ENCODE measurements at regions of chr11 and their contacts with region 1.

Region 1: GRCh38 chr11:31958076-31958735 is 132.7 kb upstream of the RCN1 start:
- DNase-seq: peak; percentile 46
- ATAC-seq: no peak
- H3K4me3 ChIP-seq: no peak overlapping the region
- H3K4me3 Mint-ChIP-seq: no peak overlapping the region
- H3K27ac ChIP-seq: no peak overlapping the region
- H3K27ac Mint-ChIP-seq: no peak overlapping the region
- H3K4me1 ChIP-seq: no peaks in the 10 kb centered on the region
- H3K4me1 Mint-ChIP-seq: no peaks in the 10 kb centered on the region
- H3K27me3 ChIP-seq: no peaks in the 10 kb centered on the region
- H3K27me3 Mint-ChIP-seq: peaks cover 13% of the 10 kb centered on the region
- CTCF ChIP-seq: peak; percentile 50

Region 2: GRCh38 chr11:31240338-31240904 is 717.8 kb before region 1 on chr11:
- CTCF ChIA-PET with region 1: interaction called, 3 read pairs
- POLR2A ChIA-PET with region 1: no interaction called
- intact Hi-C with region 1: loop called (anchors 10 kb)
- DNase-seq: peak; percentile 22
- ATAC-seq: no peak
- H3K4me3 ChIP-seq: no peak overlapping the region
- H3K4me3 Mint-ChIP-seq: no peak overlapping the region
- H3K27ac ChIP-seq: no peak overlapping the region
- H3K27ac Mint-ChIP-seq: no peak overlapping the region
- H3K4me1 ChIP-seq: no peaks in the 10 kb centered on the region
- H3K4me1 Mint-ChIP-seq: no peaks in the 10 kb centered on the region
- H3K27me3 ChIP-seq: no peaks in the 10 kb centered on the region
- H3K27me3 Mint-ChIP-seq: no peaks in the 10 kb centered on the region
- CTCF ChIP-seq: peak; percentile 33

Region 3: DNA sequence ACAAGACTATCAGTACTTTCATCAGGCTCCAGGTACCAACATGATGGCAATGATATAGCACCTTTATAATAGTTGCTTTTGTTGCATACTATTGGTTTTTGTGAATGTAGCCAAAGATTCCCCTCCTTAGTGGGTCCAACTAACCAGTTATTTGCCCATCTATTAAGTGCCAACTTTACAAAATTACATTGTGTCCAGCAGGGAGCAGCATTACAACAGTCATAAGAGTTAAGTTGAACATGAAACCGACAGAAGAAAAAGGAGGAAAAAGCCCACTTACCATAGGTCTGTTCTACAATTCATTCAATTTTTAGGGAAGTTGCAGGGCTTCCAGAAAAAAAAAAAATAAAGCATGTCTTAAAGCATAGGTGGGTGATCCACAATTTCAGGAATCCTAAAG is 470.4 kb before region 1 on chr11:
- CTCF ChIA-PET with region 1: no interaction called
- POLR2A ChIA-PET with region 1: no interaction called
- intact Hi-C with region 1: loop called (anchors 5 kb)
- DNase-seq: peak; percentile 36
- ATAC-seq: no peak
- H3K4me3 ChIP-seq: no peak overlapping the region
- H3K4me3 Mint-ChIP-seq: no peak overlapping the region
- H3K27ac ChIP-seq: no peak overlapping the region
- H3K27ac Mint-ChIP-seq: no peak overlapping the region
- H3K4me1 ChIP-seq: no peaks in the 10 kb centered on the region
- H3K4me1 Mint-ChIP-seq: peaks cover 1% of the 10 kb centered on the region
- H3K27me3 ChIP-seq: no peaks in the 10 kb centered on the region
- H3K27me3 Mint-ChIP-seq: no peaks in the 10 kb centered on the region
- CTCF ChIP-seq: peak; percentile 30

Measured in B cell (primary cell).